GM12878 (cell line): ENCODE measurements at regions of chr9 and their contacts with region 1.

Region 1: DNA sequence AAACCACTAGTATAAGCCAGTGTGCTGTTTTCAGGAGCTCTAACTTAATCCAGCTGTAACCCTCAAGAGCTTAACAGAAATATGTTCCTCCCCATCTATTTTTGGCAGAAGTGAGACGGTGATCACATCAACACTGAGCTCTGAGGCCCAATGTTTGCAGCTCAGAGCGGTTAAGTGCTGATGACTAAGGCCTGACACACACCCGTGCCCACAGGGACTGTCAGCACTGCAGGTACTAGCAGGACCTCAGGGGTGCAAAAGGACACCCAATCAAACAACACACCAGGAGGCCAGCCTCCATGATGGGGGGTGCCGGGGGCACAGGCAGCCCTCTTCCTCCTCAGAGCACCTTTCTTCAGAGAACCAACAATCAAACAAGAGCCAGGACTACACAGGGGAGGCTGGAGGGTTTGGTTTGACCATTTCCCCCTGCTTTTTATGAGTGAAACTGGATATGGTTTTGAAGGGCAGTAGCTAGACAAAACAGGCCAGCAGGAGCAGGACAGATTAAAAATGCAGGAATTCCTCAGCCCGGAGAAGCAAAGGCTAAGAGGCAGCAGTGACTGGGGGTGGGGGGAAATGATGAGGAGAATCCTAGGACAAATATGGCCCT is 61.3 kb downstream of the RAPGEF1 start:
- DNase-seq: peak; percentile 87
- ATAC-seq: peak; percentile 94
- H3K4me3 ChIP-seq: peak overlapping the region; percentile 63; the same call in 1 of the 2 replicates
- H3K27ac ChIP-seq: peak overlapping the region; percentile 87
- H3K4me1 ChIP-seq: peaks cover 50% of the 10 kb centered on the region
- H3K27me3 ChIP-seq: no peaks in the 10 kb centered on the region
- CTCF ChIP-seq: no peak
- EP300 ChIP-seq: peak; percentile 60 to 70; a peak in 3 of 4 replicates
- POLR2A ChIP-seq: peak; percentile 75
- RAD21 ChIP-seq: peak; percentile 25; the same call in 1 of the 2 replicates

Region 2: DNA sequence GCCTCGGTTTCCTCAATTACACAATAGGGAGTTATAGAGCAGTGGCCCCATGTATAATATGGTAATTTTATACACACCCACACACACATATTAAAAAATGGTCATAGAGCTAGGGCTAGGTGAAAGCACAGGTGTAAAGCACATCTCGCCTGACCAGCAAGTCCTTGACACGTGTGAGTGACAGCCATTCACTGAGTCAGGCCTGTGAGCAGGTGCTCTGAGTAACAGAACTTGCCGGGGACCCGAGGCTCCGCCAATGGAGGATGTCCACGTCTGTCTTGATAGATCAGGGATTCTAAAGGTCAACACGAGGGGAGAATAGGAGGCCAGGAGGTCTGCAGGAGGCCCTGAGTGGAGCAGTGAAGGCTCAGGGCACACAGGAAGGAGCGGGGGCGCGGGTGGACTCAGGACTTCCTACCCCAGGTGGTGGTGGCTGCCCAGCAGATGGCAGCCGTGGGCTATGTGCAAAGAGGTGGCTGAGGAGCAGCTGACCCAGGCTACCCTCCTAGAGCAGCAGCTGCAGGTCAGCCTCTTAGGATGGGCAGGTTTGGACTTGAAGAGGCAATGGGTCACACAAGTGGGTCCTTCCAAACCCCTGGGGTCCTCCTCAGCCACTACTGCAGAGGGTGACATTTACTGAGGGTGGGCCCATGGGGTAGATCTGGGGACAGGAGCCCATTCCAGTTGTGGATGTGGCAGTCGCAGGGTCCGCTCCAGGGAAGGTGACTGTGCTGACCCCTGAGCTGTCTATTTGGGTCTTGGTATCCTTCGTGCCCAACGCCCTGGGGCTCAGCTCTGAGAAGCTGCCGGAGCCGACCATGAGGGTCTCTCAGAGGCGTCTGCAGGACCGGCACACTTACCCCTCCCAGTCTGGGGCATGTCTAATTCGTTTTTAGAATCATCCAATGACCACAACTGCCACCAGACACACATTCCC is 87.4 kb before region 1 on chr9:
- CTCF ChIA-PET with region 1: interaction called, 4 read pairs
- POLR2A ChIA-PET with region 1: no interaction called
- RAD21 ChIA-PET with region 1: interaction called, 13 read pairs
- SMC1A ChIA-PET with region 1: interaction called, 3 read pairs
- in situ Hi-C with region 1: no loop called
- intact Hi-C with region 1: no loop called
- DNase-seq: peak; percentile 21
- ATAC-seq: peak; percentile 98
- H3K4me3 ChIP-seq: no peak overlapping the region
- H3K27ac ChIP-seq: no peak overlapping the region
- H3K4me1 ChIP-seq: no peaks in the 10 kb centered on the region
- H3K27me3 ChIP-seq: no peaks in the 10 kb centered on the region
- CTCF ChIP-seq: peak; percentile 73 to 97 (median 86)
- EP300 ChIP-seq: no peak
- POLR2A ChIP-seq: 0 out of 2 replicates have a peak, but pooled peaks have one; percentile 53
- RAD21 ChIP-seq: peak; percentile 78

Region 3: GRCh38 chr9:131627648-131628458 is 50.8 kb before region 1 on chr9:
- CTCF ChIA-PET with region 1: interaction called, 23 read pairs
- POLR2A ChIA-PET with region 1: interaction called, 54 read pairs
- RAD21 ChIA-PET with region 1: interaction called, 51 read pairs
- SMC1A ChIA-PET with region 1: interaction called, 47 read pairs
- in situ Hi-C with region 1: no loop called
- intact Hi-C with region 1: no loop called
- DNase-seq: no peak
- ATAC-seq: peak; percentile 48
- H3K4me3 ChIP-seq: no peak overlapping the region
- H3K27ac ChIP-seq: peak overlapping the region; percentile 88
- H3K4me1 ChIP-seq: peaks cover 44% of the 10 kb centered on the region
- H3K27me3 ChIP-seq: no peaks in the 10 kb centered on the region
- CTCF ChIP-seq: no peak
- EP300 ChIP-seq: no peak
- POLR2A ChIP-seq: 0 out of 2 replicates have a peak, but pooled peaks have one; percentile 22
- RAD21 ChIP-seq: no peak

Region 4: GRCh38 chr9:131656356-131657036 is 22.1 kb before region 1 on chr9:
- CTCF ChIA-PET with region 1: interaction called, 8 read pairs
- POLR2A ChIA-PET with region 1: interaction called, 5 read pairs
- RAD21 ChIA-PET with region 1: interaction called, 27 read pairs
- SMC1A ChIA-PET with region 1: interaction called, 128 read pairs
- in situ Hi-C with region 1: no loop called
- intact Hi-C with region 1: no loop called
- DNase-seq: peak; percentile 87
- ATAC-seq: peak; percentile 94
- H3K4me3 ChIP-seq: peak overlapping the region; percentile 47; the same call in 1 of the 2 replicates
- H3K27ac ChIP-seq: peak overlapping the region; percentile 72
- H3K4me1 ChIP-seq: peaks cover 57% of the 10 kb centered on the region
- H3K27me3 ChIP-seq: no peaks in the 10 kb centered on the region
- CTCF ChIP-seq: no peak
- EP300 ChIP-seq: no peak
- POLR2A ChIP-seq: no peak; the same call in 1 of the 2 replicates
- RAD21 ChIP-seq: no peak

Region 5: DNA sequence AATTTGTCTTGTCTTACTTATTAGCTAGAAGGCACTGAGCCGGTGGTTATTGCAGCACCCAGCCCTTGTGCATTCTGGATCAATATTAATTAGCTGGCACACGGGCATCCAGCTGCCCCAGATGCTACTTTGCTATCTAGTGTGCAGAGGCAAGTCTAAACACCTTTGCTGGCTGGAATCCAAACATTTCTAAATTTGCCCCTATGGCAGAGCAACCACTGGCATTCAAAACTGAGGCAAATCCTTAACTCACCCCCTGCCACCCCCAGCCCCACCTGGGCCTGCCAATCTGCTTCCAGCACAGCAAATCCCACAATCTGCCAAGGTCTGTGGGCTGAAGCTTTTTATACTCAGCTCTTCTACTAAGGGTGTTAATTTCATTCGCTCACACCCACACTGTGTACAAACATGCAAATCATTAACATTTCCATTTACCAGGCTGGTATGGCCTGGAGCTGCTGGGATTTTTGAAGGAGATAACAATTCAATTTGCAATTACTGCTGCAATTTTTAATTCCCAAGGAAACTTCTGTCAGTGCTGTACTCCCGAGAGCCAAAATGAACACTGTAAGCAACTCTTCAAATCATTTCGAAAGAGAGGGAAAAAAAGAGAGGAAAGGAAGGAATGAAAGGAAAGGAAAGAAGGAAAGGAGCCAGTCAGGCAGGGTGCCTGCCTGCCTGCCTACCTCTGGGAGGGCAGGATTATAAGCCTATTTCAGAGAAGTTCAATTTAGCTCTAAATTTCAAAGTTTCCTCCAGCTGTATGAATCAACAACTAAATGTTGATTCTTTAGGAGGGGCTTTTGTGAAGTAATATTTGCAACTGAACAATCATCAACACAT is 25.8 kb after region 1 on chr9:
- CTCF ChIA-PET with region 1: interaction called, 73 read pairs
- POLR2A ChIA-PET with region 1: interaction called, 113 read pairs
- RAD21 ChIA-PET with region 1: interaction called, 85 read pairs
- SMC1A ChIA-PET with region 1: interaction called, 109 read pairs
- in situ Hi-C with region 1: no loop called
- intact Hi-C with region 1: loop called (anchors 2 kb)
- DNase-seq: no peak
- ATAC-seq: peak; percentile 12; the same call in 1 of the 3 replicates
- H3K4me3 ChIP-seq: no peak overlapping the region
- H3K27ac ChIP-seq: peak overlapping the region; percentile 83
- H3K4me1 ChIP-seq: peaks cover 63% of the 10 kb centered on the region
- H3K27me3 ChIP-seq: no peaks in the 10 kb centered on the region
- CTCF ChIP-seq: no peak
- EP300 ChIP-seq: no peak
- POLR2A ChIP-seq: no peak
- RAD21 ChIP-seq: no peak

Region 6: GRCh38 chr9:131722009-131722629 is 43.5 kb after region 1 on chr9:
- CTCF ChIA-PET with region 1: interaction called, 197 read pairs
- POLR2A ChIA-PET with region 1: interaction called, 271 read pairs
- RAD21 ChIA-PET with region 1: interaction called, 408 read pairs
- SMC1A ChIA-PET with region 1: interaction called, 535 read pairs
- in situ Hi-C with region 1: no loop called
- intact Hi-C with region 1: no loop called
- DNase-seq: no peak
- ATAC-seq: no peak
- H3K4me3 ChIP-seq: no peak overlapping the region
- H3K27ac ChIP-seq: no peak overlapping the region
- H3K4me1 ChIP-seq: peaks cover 66% of the 10 kb centered on the region
- H3K27me3 ChIP-seq: no peaks in the 10 kb centered on the region
- CTCF ChIP-seq: no peak
- EP300 ChIP-seq: no peak
- POLR2A ChIP-seq: no peak
- RAD21 ChIP-seq: no peak